A549 (cell line): ENCODE measurements at regions of chr19 and their contacts with region 1.

Region 1: GRCh38 chr19:46529622-46530462 is 34.2 kb upstream of the PNMA8B start:
- DNase-seq: peak; percentile 69 to 89
- ATAC-seq: peak; percentile 63 to 84; a peak in 5 of 6 replicates
- H3K4me3 ChIP-seq: no peak overlapping the region
- H3K27ac ChIP-seq: peak overlapping the region in 1 of 2 experiments; percentile 36; a peak in 2 of 6 replicates
- H3K4me1 ChIP-seq: peaks cover 10% of the 10 kb centered on the region; the same call in 1 of the 3 replicates
- CTCF ChIP-seq: peak; percentile 100
- EP300 ChIP-seq: no peak
- POLR2A ChIP-seq: no peak
- RAD21 ChIP-seq: peak; percentile 96 to 97

Region 2: DNA sequence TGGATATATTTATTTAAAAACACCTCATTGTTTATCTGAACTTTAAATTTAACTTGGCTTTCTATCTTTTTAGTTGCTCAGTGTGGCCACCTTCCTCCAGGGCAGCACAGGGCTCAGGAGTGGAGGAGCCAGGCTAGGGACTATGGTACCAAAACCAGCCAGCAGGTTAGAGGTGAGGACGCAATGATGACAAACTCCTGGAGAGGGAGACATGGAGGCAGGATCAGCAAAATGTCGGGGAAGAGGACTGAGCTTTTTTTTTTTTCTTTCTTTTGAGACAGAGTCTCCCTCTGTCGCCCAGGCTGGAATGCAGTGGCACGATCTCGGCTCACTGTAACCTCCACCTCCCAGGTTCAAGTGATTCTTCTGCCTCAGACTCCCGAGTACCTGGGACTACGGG is 41.7 kb after region 1 on chr19:
- CTCF ChIA-PET with region 1: interaction called, 14 read pairs
- POLR2A ChIA-PET with region 1: no interaction called
- DNase-seq: peak; percentile 75 to 79
- ATAC-seq: peak; percentile 92 to 95
- H3K4me3 ChIP-seq: no peak overlapping the region
- H3K27ac ChIP-seq: no peak overlapping the region
- H3K4me1 ChIP-seq: no peaks in the 10 kb centered on the region
- CTCF ChIP-seq: 0 out of 3 replicates have a peak, but pooled peaks have one; percentile 7
- EP300 ChIP-seq: no peak
- POLR2A ChIP-seq: no peak
- RAD21 ChIP-seq: no peak; a peak in 1 of 5 replicates

Region 3: GRCh38 chr19:46579361-46579879 is 49.6 kb after region 1 on chr19:
- CTCF ChIA-PET with region 1: interaction called, 11 read pairs
- POLR2A ChIA-PET with region 1: no interaction called
- DNase-seq: peak; percentile 28 to 55
- ATAC-seq: peak; percentile 54 to 75; a peak in 4 of 6 replicates
- H3K4me3 ChIP-seq: no peak overlapping the region
- H3K27ac ChIP-seq: no peak overlapping the region
- H3K4me1 ChIP-seq: no peaks in the 10 kb centered on the region
- CTCF ChIP-seq: peak; percentile 27; the same call in 2 of the 3 replicates
- EP300 ChIP-seq: no peak
- POLR2A ChIP-seq: no peak
- RAD21 ChIP-seq: no peak